ENCODE measurements at regions of chr18 and their contacts with region 1.

Region 1: DNA sequence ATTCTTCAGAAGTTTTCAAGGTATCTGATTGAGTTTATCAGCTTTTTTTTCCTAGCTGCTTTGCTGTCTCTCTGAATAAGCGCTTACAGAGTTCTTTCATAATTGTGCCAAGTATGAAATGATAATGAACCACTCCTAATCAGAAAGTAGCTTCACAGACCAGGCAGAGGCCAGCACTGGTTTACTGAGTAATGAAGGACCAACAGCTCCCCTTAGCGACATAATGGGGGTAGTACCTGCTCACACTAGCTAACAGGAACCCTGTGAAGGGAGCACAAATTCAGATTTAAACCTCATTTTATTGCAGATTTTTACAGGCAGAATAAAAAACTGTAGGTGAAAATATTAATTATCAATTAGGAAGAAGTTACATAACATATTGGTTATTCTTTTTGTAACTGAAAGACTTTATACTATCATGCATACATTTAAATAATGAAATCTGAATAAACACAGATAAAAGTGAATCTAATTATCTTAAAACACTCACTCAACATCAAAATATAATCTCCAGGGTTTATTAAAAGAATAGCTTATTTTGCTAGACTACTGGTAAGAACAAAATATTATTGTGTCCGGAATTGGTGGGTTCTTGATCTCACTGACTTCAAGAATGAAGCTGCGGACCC is 53.7 kb upstream of the LRRC30 start:
- DNase-seq: no peak
- ATAC-seq: no peak
- H3K4me3 ChIP-seq: no peak overlapping the region
- H3K27ac ChIP-seq: no peak overlapping the region
- H3K4me1 ChIP-seq: no peaks in the 10 kb centered on the region
- H3K27me3 ChIP-seq: no peaks in the 10 kb centered on the region
- CTCF ChIP-seq: peak in 2 of 3 experiments; percentile 11 to 43; a peak in 3 of 6 replicates
- POLR2A ChIP-seq: no peak
- RAD21 ChIP-seq: peak; percentile 25; the same call in 1 of the 2 replicates

Region 2: GRCh38 chr18:7038330-7038851 is 138.8 kb before region 1 on chr18:
- CTCF ChIA-PET with region 1: interaction called, 12 read pairs
- POLR2A ChIA-PET with region 1: no interaction called
- RAD21 ChIA-PET with region 1: no interaction called
- intact Hi-C with region 1: no loop called
- DNase-seq: no peak
- ATAC-seq: no peak
- H3K4me3 ChIP-seq: no peak overlapping the region
- H3K27ac ChIP-seq: no peak overlapping the region
- H3K4me1 ChIP-seq: no peaks in the 10 kb centered on the region
- H3K27me3 ChIP-seq: no peaks in the 10 kb centered on the region
- CTCF ChIP-seq: peak in 2 of 3 experiments; percentile 24 to 43; a peak in 2 of 6 replicates
- POLR2A ChIP-seq: no peak
- RAD21 ChIP-seq: no peak

Region 3: DNA sequence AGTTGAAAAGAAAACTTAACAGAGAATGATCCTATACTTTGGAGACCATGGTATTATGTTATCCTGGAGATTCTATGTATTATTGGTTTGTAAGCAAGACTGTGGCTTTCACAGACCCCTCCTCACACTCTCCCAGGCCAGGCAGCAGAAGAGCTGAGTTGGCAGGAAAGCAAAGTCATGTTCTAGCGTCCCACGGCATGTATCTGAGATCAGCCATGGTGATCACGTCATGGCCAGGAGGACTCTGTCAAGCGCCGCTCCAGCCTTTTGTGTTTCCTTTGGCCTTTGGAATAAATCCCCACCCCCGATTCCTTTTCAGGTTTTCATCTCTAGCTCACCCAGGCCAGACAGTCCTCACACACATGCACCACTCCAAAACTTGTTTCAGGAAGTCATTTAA is 92.7 kb after region 1 on chr18:
- CTCF ChIA-PET with region 1: no interaction called
- POLR2A ChIA-PET with region 1: no interaction called
- RAD21 ChIA-PET with region 1: no interaction called
- intact Hi-C with region 1: no loop called
- DNase-seq: no peak
- ATAC-seq: no peak
- H3K4me3 ChIP-seq: no peak overlapping the region
- H3K27ac ChIP-seq: no peak overlapping the region
- H3K4me1 ChIP-seq: no peaks in the 10 kb centered on the region
- H3K27me3 ChIP-seq: no peaks in the 10 kb centered on the region
- CTCF ChIP-seq: no peak
- POLR2A ChIP-seq: no peak
- RAD21 ChIP-seq: no peak